ENCODE measurements at regions of chr1 and their contacts with region 1.

Region 1: DNA sequence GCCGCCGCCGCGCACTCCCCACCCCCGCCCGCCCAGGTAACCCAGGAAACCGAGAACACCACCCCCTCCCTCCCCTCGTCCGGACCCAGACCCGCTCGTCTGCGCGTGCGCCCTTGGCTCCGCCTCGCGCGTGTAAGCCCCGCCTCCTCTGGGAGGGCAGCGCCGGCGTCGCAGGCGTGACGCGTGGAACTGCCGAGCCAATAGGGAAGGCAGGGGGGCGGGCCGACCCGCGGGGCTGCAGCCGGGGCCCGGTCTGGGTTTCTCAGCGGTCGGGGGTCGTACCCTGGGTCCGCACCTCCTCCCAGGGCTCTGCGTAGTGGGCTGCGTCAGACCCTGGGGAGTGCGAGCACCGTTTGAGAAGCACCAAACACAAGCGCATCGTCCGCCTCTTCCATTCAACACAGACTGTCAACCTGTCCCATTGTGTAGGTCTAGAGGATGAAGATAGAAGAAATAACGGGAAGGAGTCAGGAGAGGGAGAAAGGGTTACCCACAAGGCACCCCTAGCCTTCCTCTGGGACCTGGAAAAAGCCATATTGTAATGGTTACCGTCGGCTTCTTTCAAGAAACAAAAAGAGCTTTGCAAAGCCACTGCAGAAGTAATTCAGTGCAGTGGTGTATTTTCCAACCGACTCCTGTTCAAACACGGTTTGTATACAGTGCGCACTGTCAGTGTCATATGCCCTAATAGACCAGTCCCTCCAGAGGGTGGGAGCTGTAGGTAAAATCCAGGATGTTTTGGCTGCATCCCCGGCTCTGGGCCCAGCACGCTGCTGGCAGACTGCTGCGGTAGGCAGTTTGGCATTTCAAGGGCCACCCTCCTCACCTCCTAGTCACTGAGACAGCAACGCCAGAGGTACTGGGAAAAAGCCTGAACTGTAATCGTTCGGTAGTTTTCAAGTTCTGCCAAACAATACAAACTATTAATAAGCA is 473 bp upstream of the LYST start:
- DNase-seq: peak; percentile 94 to 95
- H3K4me3 ChIP-seq: peak overlapping the region; percentile 75 to 94 (median 94)
- H3K27ac ChIP-seq: peak overlapping the region; percentile 93 to 98
- H3K4me1 ChIP-seq: peaks cover 0 to 13% of the 10 kb centered on the region in 2 donors
- H3K27me3 ChIP-seq: no peaks in the 10 kb centered on the region
- CTCF ChIP-seq: no peak
- POLR2A ChIP-seq: no peak

Region 2: GRCh38 chr1:235946571-235946981 is 79.4 kb after region 1 on chr1:
- intact Hi-C with region 1: loop called (anchors 10 kb)
- DNase-seq: no peak
- H3K4me3 ChIP-seq: no peak overlapping the region
- H3K27ac ChIP-seq: no peak overlapping the region
- H3K4me1 ChIP-seq: no peaks in the 10 kb centered on the region
- H3K27me3 ChIP-seq: no peaks in the 10 kb centered on the region
- CTCF ChIP-seq: no peak
- POLR2A ChIP-seq: no peak